ENCODE measurements at regions of chr2 and their contacts with region 1.

Region 1: GRCh38 chr2:23519334-23519651 is 134.3 kb downstream of the KLHL29 start:
- DNase-seq: no peak
- H3K4me3 ChIP-seq: no peak overlapping the region
- H3K27ac ChIP-seq: no peak overlapping the region
- H3K4me1 ChIP-seq: peaks cover 2 to 6% (median 4%) of the 10 kb centered on the region in 4 experiments; a peak in 4 of 7 replicates
- H3K27me3 ChIP-seq: no peaks in the 10 kb centered on the region; a peak in 2 of 7 replicates
- CTCF ChIP-seq: peak; percentile 40 to 42 (median 41)
- EP300 ChIP-seq: no peak
- POLR2A ChIP-seq: no peak
- RAD21 ChIP-seq: peak; percentile 43 to 65

Region 2: GRCh38 chr2:23566236-23567142 is 47.2 kb after region 1 on chr2:
- CTCF ChIA-PET with region 1: interaction called, 16 read pairs
- POLR2A ChIA-PET with region 1: no interaction called
- DNase-seq: peak; percentile 31 to 80
- H3K4me3 ChIP-seq: no peak overlapping the region
- H3K27ac ChIP-seq: no peak overlapping the region
- H3K4me1 ChIP-seq: peaks cover 0 to 10% (median 8%) of the 10 kb centered on the region in 4 experiments; a peak in 4 of 7 replicates
- H3K27me3 ChIP-seq: no peaks in the 10 kb centered on the region
- CTCF ChIP-seq: peak; percentile 52 to 88 (median 82)
- EP300 ChIP-seq: no peak
- POLR2A ChIP-seq: no peak
- RAD21 ChIP-seq: peak; percentile 61 to 71

Region 3: DNA sequence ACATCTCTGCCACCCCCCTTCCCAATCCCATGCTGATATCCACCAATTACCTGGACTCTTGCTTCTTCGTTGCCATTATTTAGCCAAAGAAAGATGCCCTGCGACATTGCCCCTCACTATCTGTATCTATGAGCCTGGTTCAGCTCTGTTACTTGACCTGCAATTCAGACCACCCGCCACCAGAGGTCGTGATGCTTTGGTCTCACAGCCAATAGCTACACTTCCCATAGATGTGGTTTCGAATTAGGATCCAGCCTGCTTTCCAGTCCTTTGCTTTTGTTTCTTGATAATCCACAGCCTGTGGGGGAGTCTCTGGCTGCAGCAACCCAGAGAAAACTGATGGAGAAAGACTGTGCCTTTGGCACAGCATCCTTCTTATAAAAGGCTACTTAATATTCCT is 105.1 kb after region 1 on chr2:
- CTCF ChIA-PET with region 1: no interaction called
- POLR2A ChIA-PET with region 1: no interaction called
- DNase-seq: peak in 1 of 2 experiments; percentile 84
- H3K4me3 ChIP-seq: no peak overlapping the region
- H3K27ac ChIP-seq: no peak overlapping the region
- H3K4me1 ChIP-seq: peaks cover 0 to 6% (median 0%) of the 10 kb centered on the region in 4 experiments; a peak in 1 of 7 replicates
- H3K27me3 ChIP-seq: no peaks in the 10 kb centered on the region; a peak in 1 of 7 replicates
- CTCF ChIP-seq: peak; percentile 50 to 87 (median 60)
- EP300 ChIP-seq: no peak
- POLR2A ChIP-seq: no peak
- RAD21 ChIP-seq: peak; percentile 38 to 61; a peak in 3 of 4 replicates

Region 4: DNA sequence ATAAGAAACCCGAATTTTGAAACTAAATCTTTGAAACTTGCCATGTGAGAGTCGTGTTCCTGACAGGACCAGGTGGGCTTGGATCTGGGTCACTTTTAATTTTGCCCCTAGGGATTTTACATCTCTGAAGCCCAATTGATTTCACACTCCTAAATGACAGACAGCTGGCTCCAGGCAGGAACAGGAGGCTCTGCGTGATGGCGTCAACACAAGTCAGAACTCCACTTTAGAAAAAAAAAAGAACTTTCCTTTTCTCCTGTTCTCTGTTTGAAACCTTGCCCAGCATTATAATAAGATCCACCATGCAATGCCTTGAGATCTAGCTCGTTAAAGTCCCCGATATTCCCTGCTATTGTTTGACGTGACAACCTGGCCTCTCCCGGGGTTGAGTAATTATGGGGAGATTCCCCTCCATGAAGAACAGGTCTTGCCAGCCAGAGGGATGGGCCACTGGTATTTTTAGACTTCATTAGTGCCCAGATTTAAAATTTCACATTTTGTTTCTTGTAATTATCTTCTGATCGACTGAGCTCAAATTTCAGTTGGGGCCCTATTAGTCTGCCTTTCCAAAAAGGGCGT is 126.0 kb after region 1 on chr2:
- CTCF ChIA-PET with region 1: no interaction called
- POLR2A ChIA-PET with region 1: no interaction called
- DNase-seq: no peak
- H3K4me3 ChIP-seq: no peak overlapping the region
- H3K27ac ChIP-seq: no peak overlapping the region
- H3K4me1 ChIP-seq: peaks cover 0 to 7% (median 0%) of the 10 kb centered on the region in 4 experiments; a peak in 1 of 7 replicates
- H3K27me3 ChIP-seq: no peaks in the 10 kb centered on the region
- CTCF ChIP-seq: no peak
- EP300 ChIP-seq: no peak
- POLR2A ChIP-seq: no peak
- RAD21 ChIP-seq: no peak

Measured in H1 (cell line).